ENCODE measurements at regions of chr2 and their contacts with region 1.

Region 1: GRCh38 chr2:144516981-144517865 is 2.7 kb downstream of the ZEB2 start:
- DNase-seq: peak; percentile 83
- H3K4me3 ChIP-seq: peak overlapping the region; percentile 89 to 94 (median 90)
- H3K27ac ChIP-seq: peak overlapping the region; percentile 97
- H3K4me1 ChIP-seq: peaks cover 57% of the 10 kb centered on the region
- H3K27me3 ChIP-seq: no peaks in the 10 kb centered on the region
- CTCF ChIP-seq: no peak
- POLR2A ChIP-seq: peak; percentile 60

Region 2: GRCh38 chr2:143841935-143842334 is 675.3 kb before region 1 on chr2:
- CTCF ChIA-PET with region 1: no interaction called
- POLR2A ChIA-PET with region 1: no interaction called
- dilution Hi-C with region 1: no loop called
- intact Hi-C with region 1: loop called (anchors 5 kb)
- DNase-seq: peak; percentile 25
- H3K4me3 ChIP-seq: no peak overlapping the region
- H3K27ac ChIP-seq: no peak overlapping the region
- H3K4me1 ChIP-seq: no peaks in the 10 kb centered on the region
- H3K27me3 ChIP-seq: peaks cover 0 to 1% of the 10 kb centered on the region in 2 experiments
- CTCF ChIP-seq: peak in 1 of 2 donors; percentile 4
- POLR2A ChIP-seq: no peak

Region 3: DNA sequence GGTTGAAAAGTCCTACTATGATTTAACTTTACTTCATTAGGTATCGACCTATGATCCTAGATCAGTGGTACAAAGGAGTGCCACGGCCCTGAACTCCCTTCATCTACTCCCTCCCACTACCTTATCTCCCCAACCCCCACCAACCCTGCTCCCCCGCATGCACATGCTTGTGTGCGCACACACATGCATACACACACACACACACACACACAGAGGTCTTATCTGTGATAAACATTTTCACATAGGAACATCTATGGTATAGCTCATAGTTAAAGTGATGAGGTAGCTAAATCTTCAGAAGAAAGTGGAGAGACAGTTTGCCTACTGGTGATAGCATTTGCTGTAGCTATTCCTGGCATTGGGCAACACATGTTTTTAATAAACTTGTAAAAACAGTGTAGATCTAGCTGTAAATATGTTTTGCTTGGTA is 468.6 kb before region 1 on chr2:
- CTCF ChIA-PET with region 1: no interaction called
- POLR2A ChIA-PET with region 1: no interaction called
- dilution Hi-C with region 1: no loop called
- intact Hi-C with region 1: no loop called
- DNase-seq: no peak
- H3K4me3 ChIP-seq: no peak overlapping the region
- H3K27ac ChIP-seq: no peak overlapping the region
- H3K4me1 ChIP-seq: no peaks in the 10 kb centered on the region
- H3K27me3 ChIP-seq: no peaks in the 10 kb centered on the region
- CTCF ChIP-seq: no peak
- POLR2A ChIP-seq: no peak

Region 4: DNA sequence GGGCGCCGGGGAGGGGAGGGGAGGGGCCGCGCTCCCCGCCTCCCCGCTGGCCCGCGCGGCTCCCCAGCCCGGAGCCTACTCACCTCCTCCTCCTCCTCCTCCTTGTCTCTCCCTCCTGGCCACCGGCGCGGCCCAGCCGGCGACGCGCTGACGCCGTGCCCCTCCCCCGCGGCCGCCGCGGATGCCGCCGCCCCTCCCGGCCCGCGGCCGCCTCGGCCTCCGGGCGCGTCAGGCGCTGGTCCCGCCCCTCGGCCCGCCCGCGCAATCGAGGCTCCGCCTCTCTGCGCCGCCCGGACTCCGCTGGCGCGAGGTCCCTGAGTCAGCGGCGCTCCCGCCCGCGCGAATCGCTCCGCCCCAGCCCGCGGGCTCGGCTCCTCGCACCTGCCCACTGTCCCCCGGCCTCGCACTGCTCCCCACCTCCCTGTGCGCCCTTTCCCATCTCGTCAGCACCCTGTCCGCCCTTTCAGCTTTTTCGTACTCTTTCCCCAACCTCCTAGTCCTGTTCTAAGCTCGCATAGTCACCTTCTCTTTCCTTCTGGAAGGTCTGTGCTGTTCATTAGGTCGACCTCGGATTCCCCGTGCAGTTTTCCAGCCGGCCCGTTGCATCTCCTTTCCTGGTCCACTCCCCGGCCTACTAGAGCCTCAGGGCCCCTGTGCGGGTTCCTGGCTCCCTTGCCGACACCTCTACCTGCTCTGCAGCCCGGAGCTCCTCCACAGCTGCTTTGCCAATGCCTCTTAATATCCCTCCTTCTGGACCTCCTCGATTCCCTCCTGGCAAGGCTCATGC is 184.7 kb before region 1 on chr2:
- CTCF ChIA-PET with region 1: interaction called, 3 read pairs
- POLR2A ChIA-PET with region 1: interaction called, 3 read pairs
- dilution Hi-C with region 1: no loop called
- intact Hi-C with region 1: loop called (anchors 1 kb)
- DNase-seq: peak; percentile 88
- H3K4me3 ChIP-seq: peak overlapping the region; percentile 49 to 71 (median 60)
- H3K27ac ChIP-seq: peak overlapping the region; percentile 85
- H3K4me1 ChIP-seq: peaks cover 15% of the 10 kb centered on the region
- H3K27me3 ChIP-seq: no peaks in the 10 kb centered on the region
- CTCF ChIP-seq: no peak
- POLR2A ChIP-seq: peak; percentile 79

Region 5: GRCh38 chr2:144449028-144449406 is 68.2 kb before region 1 on chr2:
- CTCF ChIA-PET with region 1: interaction called, 3 read pairs
- POLR2A ChIA-PET with region 1: no interaction called
- dilution Hi-C with region 1: no loop called
- intact Hi-C with region 1: loop called (anchors 1 kb)
- DNase-seq: no peak
- H3K4me3 ChIP-seq: no peak overlapping the region
- H3K27ac ChIP-seq: no peak overlapping the region
- H3K4me1 ChIP-seq: peaks cover 26% of the 10 kb centered on the region
- H3K27me3 ChIP-seq: no peaks in the 10 kb centered on the region
- CTCF ChIP-seq: peak; percentile 8 to 12
- POLR2A ChIP-seq: no peak

Region 6: DNA sequence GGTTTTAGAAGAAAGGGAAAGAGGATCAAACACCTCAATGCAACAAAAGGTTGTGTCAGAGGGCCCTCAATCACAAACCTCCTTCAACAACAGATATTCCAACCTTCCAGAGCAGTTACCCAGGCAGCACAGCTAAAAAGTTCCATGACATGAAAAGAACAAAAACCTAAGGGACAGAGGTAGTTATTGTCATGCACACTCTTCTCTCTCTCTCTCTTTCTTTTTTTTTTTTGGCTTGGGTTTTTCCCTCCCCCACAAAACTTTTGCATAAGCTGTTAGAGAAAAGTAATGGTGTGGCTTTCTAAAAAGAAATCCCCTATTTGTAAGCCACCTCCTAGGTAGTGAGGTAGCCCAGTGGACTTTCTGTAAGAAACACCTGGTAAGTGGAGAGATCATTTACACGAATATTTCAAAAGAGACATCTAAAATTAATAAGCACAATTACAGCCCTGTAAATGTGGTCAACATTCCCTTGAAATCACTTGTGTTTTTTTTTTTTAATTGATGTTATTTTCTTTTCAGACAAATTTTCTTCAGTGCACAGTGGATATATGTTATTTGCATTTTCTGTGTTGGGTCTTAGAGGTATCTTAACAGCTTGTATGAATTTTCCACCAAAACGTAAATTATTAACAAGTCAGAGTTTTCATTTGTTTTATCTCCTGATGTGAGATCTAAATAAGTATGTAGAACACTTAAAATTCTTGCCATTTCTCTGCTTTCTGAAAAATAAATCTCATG is 45.7 kb before region 1 on chr2:
- CTCF ChIA-PET with region 1: no interaction called
- POLR2A ChIA-PET with region 1: no interaction called
- dilution Hi-C with region 1: no loop called
- intact Hi-C with region 1: no loop called
- DNase-seq: no peak
- H3K4me3 ChIP-seq: no peak overlapping the region
- H3K27ac ChIP-seq: no peak overlapping the region
- H3K4me1 ChIP-seq: no peaks in the 10 kb centered on the region
- H3K27me3 ChIP-seq: no peaks in the 10 kb centered on the region
- CTCF ChIP-seq: no peak
- POLR2A ChIP-seq: no peak

Region 7: GRCh38 chr2:144572977-144573376 is 55.8 kb after region 1 on chr2:
- CTCF ChIA-PET with region 1: no interaction called
- POLR2A ChIA-PET with region 1: no interaction called
- dilution Hi-C with region 1: no loop called
- intact Hi-C with region 1: no loop called
- DNase-seq: no peak
- H3K4me3 ChIP-seq: no peak overlapping the region
- H3K27ac ChIP-seq: no peak overlapping the region
- H3K4me1 ChIP-seq: no peaks in the 10 kb centered on the region
- H3K27me3 ChIP-seq: no peaks in the 10 kb centered on the region
- CTCF ChIP-seq: no peak
- POLR2A ChIP-seq: no peak

Region 8: DNA sequence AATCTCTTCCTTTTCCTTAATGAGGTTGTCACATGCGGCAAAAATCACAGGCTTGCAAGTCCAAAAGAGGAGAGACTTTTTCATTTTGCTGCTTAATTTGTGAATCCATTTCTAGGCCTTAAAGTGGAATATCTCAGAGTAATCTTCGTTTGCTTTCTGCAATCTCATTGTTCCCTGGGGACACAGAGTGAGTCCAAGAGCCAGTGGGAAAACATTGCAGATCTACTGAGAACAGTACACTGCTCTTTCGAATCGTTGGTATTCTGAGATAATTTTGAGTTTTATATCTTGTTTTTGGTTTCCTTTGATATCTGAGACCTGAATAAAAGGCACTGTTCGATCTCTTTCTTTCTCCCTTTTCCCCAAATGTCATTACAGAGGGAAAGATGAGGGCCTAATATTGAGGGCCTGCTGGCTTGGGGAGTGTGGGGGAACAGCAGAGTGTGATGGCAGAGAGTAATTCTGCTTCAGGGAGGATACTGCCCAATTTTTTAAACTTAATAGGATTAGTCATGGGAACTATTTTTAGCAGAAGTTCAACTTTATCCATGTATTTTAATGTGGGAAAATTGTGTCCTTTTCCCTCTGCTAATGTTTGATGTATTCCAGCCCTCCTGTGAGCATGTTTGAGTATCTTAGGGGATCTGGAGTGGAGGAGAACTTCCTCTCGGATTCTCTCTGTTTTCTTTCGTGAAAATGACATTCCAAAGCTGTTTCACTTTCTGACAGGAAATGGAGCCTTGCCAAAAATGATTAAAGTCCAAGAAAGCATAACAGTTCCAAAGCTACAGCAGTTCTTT is 420.9 kb after region 1 on chr2:
- CTCF ChIA-PET with region 1: no interaction called
- POLR2A ChIA-PET with region 1: no interaction called
- dilution Hi-C with region 1: no loop called
- intact Hi-C with region 1: loop called (anchors 2 kb)
- DNase-seq: peak; percentile 92
- H3K4me3 ChIP-seq: no peak overlapping the region
- H3K27ac ChIP-seq: peak overlapping the region; percentile 59
- H3K4me1 ChIP-seq: peaks cover 40% of the 10 kb centered on the region
- H3K27me3 ChIP-seq: no peaks in the 10 kb centered on the region
- CTCF ChIP-seq: no peak
- POLR2A ChIP-seq: no peak

Region 9: GRCh38 chr2:145593832-145594614 is 1076.8 kb after region 1 on chr2:
- CTCF ChIA-PET with region 1: no interaction called
- POLR2A ChIA-PET with region 1: no interaction called
- dilution Hi-C with region 1: no loop called
- intact Hi-C with region 1: loop called (anchors 1 kb)
- DNase-seq: peak; percentile 87
- H3K4me3 ChIP-seq: no peak overlapping the region
- H3K27ac ChIP-seq: peak overlapping the region; percentile 82
- H3K4me1 ChIP-seq: peaks cover 51% of the 10 kb centered on the region
- H3K27me3 ChIP-seq: no peaks in the 10 kb centered on the region
- CTCF ChIP-seq: peak in 1 of 2 donors; percentile 25
- POLR2A ChIP-seq: no peak